BJ (cell line): ENCODE measurements at regions of chr5 and their contacts with region 1.

Region 1: DNA sequence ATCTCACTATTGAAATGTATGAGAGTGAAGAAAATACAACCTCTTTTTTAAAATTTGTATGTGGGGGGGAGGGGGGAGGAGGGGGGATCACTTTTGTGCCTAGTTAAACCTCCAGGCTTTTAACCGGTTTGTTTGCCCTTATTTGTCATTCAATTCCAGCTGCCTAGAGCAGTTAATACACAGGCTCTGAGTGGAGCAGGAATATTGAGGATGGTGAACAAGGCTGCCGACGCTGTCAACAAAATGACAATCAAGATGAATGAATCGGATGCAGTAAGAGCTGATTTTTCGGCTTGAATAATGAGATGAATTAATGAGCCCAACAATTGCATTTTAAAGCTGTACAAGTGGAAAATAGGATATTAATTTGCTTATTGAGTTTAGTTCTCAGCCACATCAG is 28.7 kb upstream of the SNX24 start:
- DNase-seq: no peak
- H3K4me3 ChIP-seq: no peak overlapping the region
- H3K27me3 ChIP-seq: no peaks in the 10 kb centered on the region
- CTCF ChIP-seq: no peak

Region 2: GRCh38 chr5:122805481-122805880 is 11.3 kb before region 1 on chr5:
- CTCF ChIA-PET with region 1: no interaction called
- POLR2A ChIA-PET with region 1: interaction called, 12 read pairs
- DNase-seq: no peak
- H3K4me3 ChIP-seq: no peak overlapping the region
- H3K27me3 ChIP-seq: no peaks in the 10 kb centered on the region
- CTCF ChIP-seq: no peak

Region 3: DNA sequence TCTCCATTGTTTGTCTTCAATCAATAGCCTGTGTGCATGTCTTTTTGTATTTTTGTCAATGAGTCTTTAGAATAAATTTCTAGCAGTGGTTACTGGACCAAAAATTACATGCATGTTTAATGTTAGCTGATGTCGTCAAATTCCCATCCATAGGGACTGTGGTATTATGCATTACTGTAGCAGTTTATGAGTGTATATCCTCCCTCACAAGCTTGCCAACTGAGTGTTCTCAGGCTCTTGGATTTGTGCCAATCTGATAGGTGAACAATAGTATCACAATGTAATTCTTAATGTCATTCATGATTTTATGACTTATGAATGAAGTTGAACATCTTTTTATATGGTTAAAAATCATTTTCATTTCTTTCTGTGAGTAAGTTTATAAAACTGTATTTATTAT is 41.7 kb after region 1 on chr5:
- CTCF ChIA-PET with region 1: no interaction called
- POLR2A ChIA-PET with region 1: no interaction called
- DNase-seq: no peak
- H3K4me3 ChIP-seq: no peak overlapping the region
- H3K27me3 ChIP-seq: no peaks in the 10 kb centered on the region
- CTCF ChIP-seq: no peak